ENCODE measurements at regions of chr18 and their contacts with region 1.

Region 1: GRCh38 chr18:23812546-23813440 is 123.5 kb downstream of the LAMA3 start:
- DNase-seq: no peak
- H3K4me3 ChIP-seq: no peak overlapping the region
- H3K27ac ChIP-seq: no peak overlapping the region
- H3K4me1 ChIP-seq: no peaks in the 10 kb centered on the region
- H3K27me3 ChIP-seq: no peaks in the 10 kb centered on the region
- CTCF ChIP-seq: peak; percentile 52 to 60 (median 58)
- EP300 ChIP-seq: no peak
- POLR2A ChIP-seq: no peak

Region 2: DNA sequence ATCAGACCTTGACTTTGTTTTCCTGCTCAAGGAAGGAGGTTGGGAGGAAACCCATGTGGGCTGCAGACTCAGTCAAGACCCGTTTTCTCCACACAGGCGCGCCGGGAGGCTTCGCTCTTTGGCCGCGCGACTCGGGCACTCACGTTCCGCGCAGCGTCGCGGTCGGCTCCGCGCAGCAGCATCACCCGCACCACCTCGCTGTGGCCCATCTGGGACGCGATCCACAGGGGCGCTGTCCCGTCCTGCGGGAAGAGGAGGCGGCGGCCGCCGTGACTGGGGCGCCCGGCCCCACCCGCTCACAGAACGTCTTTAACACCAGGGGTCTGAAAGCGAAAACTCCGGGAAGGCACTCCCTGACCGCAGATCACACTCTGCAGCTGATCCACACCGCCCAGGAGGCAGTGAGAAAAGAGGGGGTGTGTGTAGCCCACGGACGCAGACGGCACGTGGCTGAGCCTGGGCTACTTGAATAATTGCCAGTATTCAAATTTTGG is 193.4 kb before region 1 on chr18:
- in situ Hi-C with region 1: loop called (anchors 10 to 25 kb)
- intact Hi-C with region 1: loop called (anchors 5 kb)
- DNase-seq: peak; percentile 17
- H3K4me3 ChIP-seq: peak overlapping the region in 3 of 4 donors; percentile 16 to 52 (median 35)
- H3K27ac ChIP-seq: peak overlapping the region in 3 of 4 donors; percentile 8 to 44 (median 21)
- H3K4me1 ChIP-seq: peaks cover 0 to 24% (median 16%) of the 10 kb centered on the region in 4 donors
- H3K27me3 ChIP-seq: peaks cover 32% of the 10 kb centered on the region
- CTCF ChIP-seq: no peak
- EP300 ChIP-seq: no peak
- POLR2A ChIP-seq: no peak

Region 3: DNA sequence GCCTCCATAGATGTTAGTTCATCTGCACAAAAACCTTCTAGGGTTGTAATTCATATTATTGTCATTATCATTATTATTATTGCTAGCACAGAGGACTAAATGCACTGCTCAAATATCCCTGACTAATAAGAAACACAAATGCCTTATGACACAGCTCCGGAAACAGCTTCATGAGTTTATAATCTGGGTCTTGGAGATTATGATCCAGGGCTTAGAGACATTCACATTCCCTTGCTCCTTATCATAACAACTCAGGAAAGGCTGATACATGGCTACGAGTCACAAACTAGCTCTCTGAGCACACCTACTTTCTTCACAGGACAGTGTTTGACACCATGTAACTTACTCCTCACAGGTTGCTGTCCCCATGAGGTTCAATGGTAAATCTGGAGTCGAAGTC is 99.6 kb after region 1 on chr18:
- in situ Hi-C with region 1: no loop called
- intact Hi-C with region 1: no loop called
- DNase-seq: no peak
- H3K4me3 ChIP-seq: no peak overlapping the region
- H3K27ac ChIP-seq: no peak overlapping the region
- H3K4me1 ChIP-seq: no peaks in the 10 kb centered on the region
- H3K27me3 ChIP-seq: no peaks in the 10 kb centered on the region
- CTCF ChIP-seq: no peak
- EP300 ChIP-seq: no peak
- POLR2A ChIP-seq: no peak

Region 4: DNA sequence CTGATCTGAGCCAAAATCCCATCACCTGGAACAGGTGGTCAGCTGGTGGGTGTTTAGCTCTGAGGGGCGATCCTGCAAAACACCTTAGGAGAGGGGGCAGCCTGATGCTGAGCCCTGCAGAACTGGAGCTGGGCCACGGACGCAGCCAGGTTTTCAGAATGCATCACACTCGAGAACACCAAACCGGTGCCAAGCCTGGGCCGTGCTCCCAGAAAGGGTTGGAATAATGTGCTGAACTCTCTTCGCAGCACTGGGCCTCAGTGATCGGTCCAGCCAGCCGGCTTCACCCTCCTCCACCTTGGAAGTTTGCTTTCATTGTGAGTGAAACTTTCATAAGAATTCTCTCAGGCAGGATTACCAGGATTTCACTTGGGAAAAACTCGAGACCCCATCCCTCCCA is 145.2 kb after region 1 on chr18:
- in situ Hi-C with region 1: no loop called
- intact Hi-C with region 1: no loop called
- DNase-seq: peak; percentile 46
- H3K4me3 ChIP-seq: no peak overlapping the region
- H3K27ac ChIP-seq: peak overlapping the region in 3 of 4 donors; percentile 30 to 69 (median 56)
- H3K4me1 ChIP-seq: peaks cover 0 to 4% (median 0%) of the 10 kb centered on the region in 4 donors
- H3K27me3 ChIP-seq: no peaks in the 10 kb centered on the region
- CTCF ChIP-seq: no peak
- EP300 ChIP-seq: no peak
- POLR2A ChIP-seq: no peak

Region 5: DNA sequence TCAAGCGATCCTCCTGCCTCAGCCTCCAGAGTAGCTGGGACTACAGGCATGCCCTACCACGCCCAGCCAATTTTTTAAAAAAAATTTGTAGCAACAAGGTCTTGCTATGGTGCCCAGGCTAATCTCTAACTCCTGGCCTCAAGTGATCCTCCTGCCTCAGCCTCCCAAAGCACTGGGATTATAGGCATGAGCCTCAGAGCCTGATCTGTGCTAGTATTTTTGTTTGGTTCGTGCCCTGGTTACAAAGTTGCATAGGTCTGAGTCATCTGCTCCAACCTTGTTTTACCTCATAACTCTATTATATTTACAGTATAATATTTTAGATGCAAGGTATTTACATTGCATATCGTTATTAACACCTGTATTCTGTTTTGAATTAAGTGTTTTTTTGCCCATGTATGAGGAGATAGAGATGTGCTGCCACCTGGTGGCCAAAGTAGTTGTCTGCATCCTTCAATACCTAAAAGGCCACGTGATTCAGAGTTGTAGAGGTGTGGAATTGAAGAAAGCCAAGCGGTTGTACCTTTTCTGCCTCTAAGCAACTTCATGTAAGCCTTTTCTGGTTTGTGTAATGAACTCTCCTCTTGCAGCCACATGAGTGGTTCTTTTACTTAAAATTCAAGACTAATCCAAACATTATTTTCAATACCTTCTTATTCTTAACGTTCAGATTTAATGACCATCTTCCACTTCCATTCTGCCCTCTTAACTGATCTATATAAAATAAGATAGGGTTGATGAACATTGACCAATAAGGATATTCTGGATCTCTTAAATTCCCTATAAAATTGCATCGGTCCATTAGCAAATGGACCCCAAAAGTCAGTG is 306.2 kb after region 1 on chr18:
- in situ Hi-C with region 1: loop called in 1 of 4 experiments (anchors 25 kb)
- intact Hi-C with region 1: no loop called
- DNase-seq: peak; percentile 80
- H3K4me3 ChIP-seq: no peak overlapping the region
- H3K27ac ChIP-seq: no peak overlapping the region
- H3K4me1 ChIP-seq: no peaks in the 10 kb centered on the region
- H3K27me3 ChIP-seq: no peaks in the 10 kb centered on the region
- CTCF ChIP-seq: peak; percentile 88 to 97 (median 93)
- EP300 ChIP-seq: no peak
- POLR2A ChIP-seq: no peak